ENCODE measurements at regions of chrX and their contacts with region 1.

Region 1: GRCh38 chrX:14528629-14529289 is 577 bp upstream of the GLRA2 start:
- DNase-seq: peak in 7 of 9 donors; percentile 2 to 34 (median 7)
- ATAC-seq: no peak
- H3K4me3 ChIP-seq: no peak overlapping the region
- H3K4me3 Mint-ChIP-seq: peak overlapping the region in 2 of 10 donors; percentile 19 to 56
- H3K27ac ChIP-seq: no peak overlapping the region
- H3K27ac Mint-ChIP-seq: no peak overlapping the region
- H3K4me1 ChIP-seq: no peaks in the 10 kb centered on the region
- H3K4me1 Mint-ChIP-seq: peaks cover 0 to 5% (median 0%) of the 10 kb centered on the region in 7 donors
- H3K27me3 ChIP-seq: no peaks in the 10 kb centered on the region
- H3K27me3 Mint-ChIP-seq: peaks cover 0 to 16% (median 4%) of the 10 kb centered on the region in 5 donors

Region 2: GRCh38 chrX:14039344-14039743 is 489.4 kb before region 1 on chrX:
- CTCF ChIA-PET with region 1: no interaction called
- POLR2A ChIA-PET with region 1: no interaction called
- intact Hi-C with region 1: loop called in 1 of 2 experiments (anchors 1 kb)
- DNase-seq: peak in 7 of 9 donors; percentile 38 to 73 (median 62)
- ATAC-seq: peak; percentile 95
- H3K4me3 ChIP-seq: no peak overlapping the region
- H3K4me3 Mint-ChIP-seq: no peak overlapping the region
- H3K27ac ChIP-seq: no peak overlapping the region
- H3K27ac Mint-ChIP-seq: no peak overlapping the region
- H3K4me1 ChIP-seq: no peaks in the 10 kb centered on the region
- H3K4me1 Mint-ChIP-seq: no peaks in the 10 kb centered on the region
- H3K27me3 ChIP-seq: no peaks in the 10 kb centered on the region
- H3K27me3 Mint-ChIP-seq: peaks cover 0 to 21% (median 0%) of the 10 kb centered on the region in 5 donors

Region 3: GRCh38 chrX:14916017-14916674 is 387.4 kb after region 1 on chrX:
- CTCF ChIA-PET with region 1: no interaction called
- POLR2A ChIA-PET with region 1: no interaction called
- intact Hi-C with region 1: no loop called
- DNase-seq: no peak
- ATAC-seq: no peak
- H3K4me3 ChIP-seq: no peak overlapping the region
- H3K4me3 Mint-ChIP-seq: no peak overlapping the region
- H3K27ac ChIP-seq: no peak overlapping the region
- H3K27ac Mint-ChIP-seq: no peak overlapping the region
- H3K4me1 ChIP-seq: no peaks in the 10 kb centered on the region
- H3K4me1 Mint-ChIP-seq: peaks cover 0 to 4% (median 0%) of the 10 kb centered on the region in 7 donors
- H3K27me3 ChIP-seq: no peaks in the 10 kb centered on the region
- H3K27me3 Mint-ChIP-seq: no peaks in the 10 kb centered on the region